T-cell (primary cell): ENCODE measurements at regions of chr6 and their contacts with region 1.

Region 1: DNA sequence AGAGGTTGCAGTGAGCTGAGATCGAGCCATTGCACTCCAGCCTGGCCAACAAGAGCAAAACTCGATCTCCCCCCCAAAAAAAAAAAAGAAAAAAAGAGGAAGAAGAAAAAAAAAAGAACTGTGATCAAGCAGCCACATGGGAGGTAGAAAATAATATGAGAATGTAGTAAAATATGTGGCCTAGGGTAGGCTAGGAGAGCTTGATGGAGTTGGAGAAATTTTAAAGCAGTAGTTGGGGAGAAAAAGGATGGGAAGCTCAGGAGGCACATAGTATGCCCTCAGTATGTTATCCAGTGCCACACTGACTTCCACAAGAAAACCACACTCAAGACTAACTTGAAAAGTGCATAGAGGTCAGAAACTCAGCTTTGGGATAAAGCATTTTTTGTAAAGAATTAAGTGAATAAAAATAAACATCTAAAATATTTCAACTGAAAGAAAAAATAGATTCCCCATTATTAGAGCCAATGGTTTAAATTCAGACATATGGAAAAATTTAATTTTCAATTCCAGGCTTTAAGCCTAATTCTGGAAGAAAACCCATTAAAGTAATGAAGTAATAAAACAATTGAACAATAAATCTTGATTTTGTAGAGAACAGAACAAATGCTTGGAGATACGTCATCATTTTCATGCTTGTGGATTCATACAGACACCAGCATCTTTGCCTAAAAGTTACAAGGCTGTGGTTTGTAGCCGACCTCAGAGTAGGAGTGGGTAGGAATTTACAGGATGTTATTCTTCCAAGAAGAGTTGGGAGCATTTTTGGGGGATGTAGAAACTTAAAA is 34.7 kb downstream of the PLEKHG1 start:
- DNase-seq: no peak
- ATAC-seq: no peak
- H3K4me3 ChIP-seq: no peak overlapping the region
- H3K4me3 Mint-ChIP-seq: peak overlapping the region; percentile 73 to 81 (median 78)
- H3K27ac ChIP-seq: no peak overlapping the region
- H3K27ac Mint-ChIP-seq: peak overlapping the region; percentile 85 to 86
- H3K4me1 ChIP-seq: peaks cover 2 to 22% of the 10 kb centered on the region in 2 experiments
- H3K4me1 Mint-ChIP-seq: peaks cover 27 to 66% (median 44%) of the 10 kb centered on the region in 3 donors
- H3K27me3 ChIP-seq: peaks cover 0 to 3% of the 10 kb centered on the region in 2 experiments
- H3K27me3 Mint-ChIP-seq: no peaks in the 10 kb centered on the region

Region 2: GRCh38 chr6:150668900-150669302 is 34.5 kb after region 1 on chr6:
- CTCF ChIA-PET with region 1: no interaction called
- POLR2A ChIA-PET with region 1: interaction called in 1 of 2 experiments, 10 read pairs
- DNase-seq: no peak
- ATAC-seq: no peak
- H3K4me3 ChIP-seq: no peak overlapping the region
- H3K4me3 Mint-ChIP-seq: no peak overlapping the region
- H3K27ac ChIP-seq: no peak overlapping the region
- H3K27ac Mint-ChIP-seq: no peak overlapping the region
- H3K4me1 ChIP-seq: no peaks in the 10 kb centered on the region
- H3K4me1 Mint-ChIP-seq: peaks cover 6 to 10% (median 9%) of the 10 kb centered on the region in 3 donors
- H3K27me3 ChIP-seq: no peaks in the 10 kb centered on the region
- H3K27me3 Mint-ChIP-seq: no peaks in the 10 kb centered on the region